Heart right ventricle (tissue), 16 donors: ENCODE measurements at regions of chr10 and their contacts with region 1.

Region 1: DNA sequence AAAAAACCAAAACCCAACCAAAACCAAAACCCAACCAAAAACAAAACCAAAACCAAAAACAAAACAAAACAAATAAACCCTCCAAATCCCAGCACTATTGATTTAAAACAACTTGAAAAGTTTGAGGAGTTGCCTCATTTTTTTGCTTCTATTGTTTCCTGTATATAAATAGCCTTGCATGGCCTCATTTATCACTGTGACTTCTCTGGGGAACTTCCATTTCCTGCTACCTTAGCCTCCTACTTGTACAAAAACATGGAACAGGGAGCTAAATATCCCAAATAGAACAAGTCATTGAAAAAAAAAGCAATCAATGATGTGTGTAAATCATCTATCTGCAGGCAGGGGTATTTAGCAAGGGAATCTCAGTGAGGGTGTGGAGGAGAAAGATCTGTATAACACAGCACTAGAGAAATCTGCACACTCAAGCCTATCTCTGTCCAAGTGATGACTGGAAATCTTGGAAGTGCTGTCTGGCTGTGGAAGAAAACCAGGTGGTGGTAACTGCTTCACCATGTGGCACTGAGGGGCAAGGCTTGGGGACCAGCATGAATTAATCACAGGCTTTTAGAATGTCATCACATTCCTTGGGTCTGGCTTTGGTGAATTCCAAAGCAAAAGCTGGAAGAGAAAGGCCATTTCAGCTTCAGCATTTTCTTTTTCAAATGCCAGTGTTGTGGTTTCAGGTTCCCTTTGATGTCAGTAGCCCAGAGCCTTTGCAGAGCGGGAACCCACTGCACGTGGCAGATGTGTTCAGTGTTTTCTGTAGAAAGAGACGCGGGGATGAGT is 349.5 kb upstream of the ZNF32 start:
- DNase-seq: no peak
- ATAC-seq: peak in 7 of 8 donors; percentile 46 to 82 (median 68)
- H3K4me3 ChIP-seq: no peak overlapping the region
- H3K27ac ChIP-seq: peak overlapping the region in 8 of 10 donors; percentile 17 to 70 (median 33)
- H3K4me1 ChIP-seq: peaks cover 0 to 24% (median 19%) of the 10 kb centered on the region in 9 donors
- H3K27me3 ChIP-seq: no peaks in the 10 kb centered on the region
- CTCF ChIP-seq: no peak

Region 2: GRCh38 chr10:43913676-43914385 is 84.4 kb before region 1 on chr10:
- intact Hi-C with region 1: loop called in 1 of 10 experiments (anchors 5 kb)
- DNase-seq: no peak
- ATAC-seq: no peak
- H3K4me3 ChIP-seq: no peak overlapping the region
- H3K27ac ChIP-seq: peak overlapping the region in 1 of 10 donors; percentile 18
- H3K4me1 ChIP-seq: peaks cover 2 to 37% (median 23%) of the 10 kb centered on the region in 9 donors
- H3K27me3 ChIP-seq: no peaks in the 10 kb centered on the region
- CTCF ChIP-seq: no peak